Sigmoid colon (tissue), 7 donors: ENCODE measurements at regions of chr3 and their contacts with region 1.

Region 1: DNA sequence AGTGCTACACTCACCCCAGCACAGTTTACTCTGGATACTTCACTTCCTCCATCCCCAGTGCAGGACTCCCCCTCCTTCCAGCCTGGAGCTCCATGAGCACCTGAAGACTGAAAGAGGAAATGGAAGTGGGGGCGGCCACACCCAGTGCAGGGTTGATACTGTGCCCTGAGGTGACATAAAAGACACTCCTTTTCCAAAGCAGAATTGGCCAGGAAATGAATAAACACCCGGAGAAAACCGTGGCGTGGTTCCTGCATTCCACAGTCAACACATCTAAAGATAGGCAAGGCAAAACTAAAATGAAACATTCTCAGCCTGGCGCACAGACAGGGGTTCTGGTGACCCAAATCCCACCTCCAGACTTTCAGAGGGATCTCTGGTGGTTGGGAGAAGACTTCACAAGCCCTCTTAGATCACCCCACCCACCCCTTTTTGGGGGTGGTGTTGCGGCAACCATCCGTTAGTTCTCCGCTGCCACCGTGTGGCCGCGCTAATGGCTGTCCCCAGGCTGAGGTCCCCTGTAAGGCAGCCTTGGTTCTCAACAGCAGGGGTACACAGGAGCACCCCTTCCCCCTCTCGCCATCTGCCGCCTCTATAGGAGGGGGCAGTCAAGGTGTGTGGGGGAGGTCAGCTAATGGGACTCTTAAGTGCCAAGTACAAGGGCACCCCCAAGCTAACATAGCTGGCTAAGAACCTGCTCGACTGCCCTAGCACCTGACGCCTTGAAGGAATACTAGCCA is 2.5 kb upstream of the MST1R start:
- DNase-seq: no peak
- H3K4me3 ChIP-seq: peak overlapping the region in 3 of 4 donors; percentile 30 to 38 (median 35)
- H3K27ac ChIP-seq: peak overlapping the region; percentile 32 to 61 (median 46)
- H3K4me1 ChIP-seq: peaks cover 0 to 34% (median 22%) of the 10 kb centered on the region in 4 donors
- H3K27me3 ChIP-seq: no peaks in the 10 kb centered on the region
- CTCF ChIP-seq: peak; percentile 24 to 80 (median 58)
- EP300 ChIP-seq: no peak
- POLR2A ChIP-seq: no peak

Region 2: GRCh38 chr3:49703443-49703927 is 202.7 kb before region 1 on chr3:
- intact Hi-C with region 1: loop called (anchors 5 kb)
- DNase-seq: peak; percentile 80
- H3K4me3 ChIP-seq: no peak overlapping the region
- H3K27ac ChIP-seq: no peak overlapping the region
- H3K4me1 ChIP-seq: peaks cover 0 to 2% (median 0%) of the 10 kb centered on the region in 4 donors
- H3K27me3 ChIP-seq: no peaks in the 10 kb centered on the region
- CTCF ChIP-seq: peak; percentile 30 to 76 (median 72)
- EP300 ChIP-seq: no peak
- POLR2A ChIP-seq: no peak

Region 3: GRCh38 chr3:49802719-49803464 is 103.3 kb before region 1 on chr3 and contains the start of gene INKA1:
- intact Hi-C with region 1: loop called (anchors 1 kb)
- DNase-seq: peak; percentile 95
- H3K4me3 ChIP-seq: peak within 1 kb of the TSS; percentile 57 to 86 (median 70)
- H3K27ac ChIP-seq: peak within 1 kb of the TSS; percentile 88 to 95 (median 92)
- H3K4me1 ChIP-seq: peaks cover 0 to 50% (median 38%) of the 10 kb centered on the region in 4 donors
- H3K27me3 ChIP-seq: no peaks in the 10 kb centered on the region
- CTCF ChIP-seq: peak in 3 of 4 experiments; percentile 87 to 91 (median 88)
- EP300 ChIP-seq: no peak
- POLR2A ChIP-seq: no peak
- total RNA-seq, gene INKA1: 0.95 to 5.0 (median 4.1) TPM